ENCODE measurements at regions of chr1 and their contacts with region 1.

Region 1: GRCh38 chr1:173420330-173420806 is 56.8 kb upstream of the PRDX6 start:
- DNase-seq: peak; percentile 100
- ATAC-seq: peak; percentile 50
- H3K4me3 ChIP-seq: peak overlapping the region; percentile 35
- H3K27ac ChIP-seq: 0 out of 2 replicates have a peak overlapping the region, but pooled peaks have one; percentile 1
- H3K4me1 ChIP-seq: peaks cover 42% of the 10 kb centered on the region
- H3K27me3 ChIP-seq: no peaks in the 10 kb centered on the region
- CTCF ChIP-seq: peak; percentile 100

Region 2: GRCh38 chr1:172895050-172895460 is 525.3 kb before region 1 on chr1:
- CTCF ChIA-PET with region 1: no interaction called
- POLR2A ChIA-PET with region 1: no interaction called
- intact Hi-C with region 1: no loop called
- DNase-seq: peak; percentile 54
- ATAC-seq: peak; percentile 66
- H3K4me3 ChIP-seq: peak overlapping the region; percentile 14; the same call in 1 of the 2 replicates
- H3K27ac ChIP-seq: no peak overlapping the region
- H3K4me1 ChIP-seq: peaks cover 39% of the 10 kb centered on the region
- H3K27me3 ChIP-seq: no peaks in the 10 kb centered on the region
- CTCF ChIP-seq: no peak

Region 3: DNA sequence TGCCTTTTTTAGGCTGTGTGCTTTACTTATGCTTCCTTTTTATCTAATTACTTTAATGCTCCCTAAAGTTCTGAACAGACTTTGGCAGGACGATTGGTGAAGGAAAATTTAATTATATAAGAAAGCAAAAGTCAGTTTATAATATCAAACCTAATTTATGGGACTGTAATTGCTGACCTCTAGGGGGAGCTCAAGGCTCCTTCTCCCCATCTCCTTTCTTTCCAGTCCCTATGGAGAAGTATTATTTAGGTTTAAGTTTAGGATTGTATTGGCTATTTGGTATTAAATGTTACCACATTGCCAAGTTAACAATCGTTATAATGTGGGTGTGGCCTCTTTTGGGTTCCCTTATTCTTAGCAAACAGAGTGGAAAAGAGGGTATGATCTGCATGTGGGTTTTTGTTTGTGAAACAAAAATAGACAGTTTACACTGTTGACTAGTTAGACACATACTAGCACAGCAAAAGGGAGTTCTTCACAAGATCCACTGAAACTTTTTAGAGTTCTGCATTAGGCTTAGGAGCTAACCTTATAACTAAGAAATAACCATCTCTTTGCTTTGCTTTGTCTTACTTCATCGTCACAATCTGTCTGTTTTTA is 165.1 kb before region 1 on chr1:
- CTCF ChIA-PET with region 1: interaction called, 5 read pairs
- POLR2A ChIA-PET with region 1: no interaction called
- intact Hi-C with region 1: loop called (anchors 1 kb)
- DNase-seq: peak; percentile 90
- ATAC-seq: peak; percentile 90
- H3K4me3 ChIP-seq: no peak overlapping the region
- H3K27ac ChIP-seq: no peak overlapping the region
- H3K4me1 ChIP-seq: no peaks in the 10 kb centered on the region
- H3K27me3 ChIP-seq: no peaks in the 10 kb centered on the region
- CTCF ChIP-seq: peak; percentile 100

Region 4: DNA sequence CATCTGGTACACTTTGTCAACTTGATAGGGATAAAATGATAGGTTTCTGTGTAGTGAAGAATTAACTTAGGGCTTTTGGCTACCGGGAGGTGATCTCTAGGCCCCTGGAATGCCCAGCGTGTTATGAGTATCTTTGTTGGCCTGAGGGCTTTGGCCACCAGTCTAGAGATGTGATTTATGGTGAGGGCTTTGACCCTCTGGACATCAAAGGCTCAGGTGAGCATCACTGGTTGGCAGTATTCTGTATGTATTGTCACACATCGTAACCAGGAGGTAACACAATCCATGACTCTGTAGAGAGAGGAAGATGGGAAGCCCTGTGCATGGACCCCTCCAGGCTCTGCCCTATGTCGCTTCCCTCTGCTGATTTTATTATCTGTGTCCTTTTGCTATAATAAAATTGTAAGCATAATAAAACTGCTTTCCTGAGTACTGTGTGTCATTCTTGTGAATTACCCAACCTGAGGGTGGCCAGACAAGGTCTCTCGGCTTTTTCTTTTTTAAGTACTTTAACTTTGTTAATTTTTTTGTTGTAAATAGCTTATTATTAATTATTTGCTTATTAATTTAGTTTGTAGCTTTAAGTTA is 16.6 kb after region 1 on chr1:
- CTCF ChIA-PET with region 1: no interaction called
- POLR2A ChIA-PET with region 1: no interaction called
- intact Hi-C with region 1: no loop called
- DNase-seq: no peak
- ATAC-seq: no peak
- H3K4me3 ChIP-seq: no peak overlapping the region
- H3K27ac ChIP-seq: no peak overlapping the region
- H3K4me1 ChIP-seq: peaks cover 1% of the 10 kb centered on the region; the same call in 1 of the 2 replicates
- H3K27me3 ChIP-seq: no peaks in the 10 kb centered on the region
- CTCF ChIP-seq: no peak

Region 5: GRCh38 chr1:173824331-173825081 is 404.1 kb after region 1 on chr1 and contains the starts of genes CENPL and DARS2:
- CTCF ChIA-PET with region 1: no interaction called
- POLR2A ChIA-PET with region 1: interaction called, 7 read pairs
- intact Hi-C with region 1: loop called (anchors 1 kb)
- DNase-seq: peak; percentile 100
- ATAC-seq: peak; percentile 88
- H3K4me3 ChIP-seq: peak within 1 kb of the TSS; percentile 72
- H3K27ac ChIP-seq: peak within 1 kb of the TSS; percentile 81
- H3K4me1 ChIP-seq: peaks cover 56% of the 10 kb centered on the region
- H3K27me3 ChIP-seq: no peaks in the 10 kb centered on the region
- CTCF ChIP-seq: no peak
- total RNA-seq, gene CENPL: 92.8 and 108 TPM in 2 replicates
- total RNA-seq, gene DARS2: 71.8 and 77.3 TPM in 2 replicates

Region 6: GRCh38 chr1:174074757-174075156 is 654.4 kb after region 1 on chr1:
- CTCF ChIA-PET with region 1: no interaction called
- POLR2A ChIA-PET with region 1: no interaction called
- intact Hi-C with region 1: loop called (anchors 5 kb)
- DNase-seq: peak; percentile 42
- ATAC-seq: no peak; the same call in 1 of the 2 replicates
- H3K4me3 ChIP-seq: no peak overlapping the region
- H3K27ac ChIP-seq: no peak overlapping the region
- H3K4me1 ChIP-seq: no peaks in the 10 kb centered on the region
- H3K27me3 ChIP-seq: no peaks in the 10 kb centered on the region
- CTCF ChIP-seq: peak; percentile 62

Region 7: GRCh38 chr1:174743654-174744561 is 1323.5 kb after region 1 on chr1:
- CTCF ChIA-PET with region 1: no interaction called
- POLR2A ChIA-PET with region 1: no interaction called
- intact Hi-C with region 1: loop called (anchors 5 kb)
- DNase-seq: peak; percentile 42
- ATAC-seq: no peak
- H3K4me3 ChIP-seq: no peak overlapping the region
- H3K27ac ChIP-seq: no peak overlapping the region
- H3K4me1 ChIP-seq: no peaks in the 10 kb centered on the region
- H3K27me3 ChIP-seq: no peaks in the 10 kb centered on the region
- CTCF ChIP-seq: peak; percentile 66